ENCODE measurements at regions of chr10 and their contacts with region 1.

Region 1: DNA sequence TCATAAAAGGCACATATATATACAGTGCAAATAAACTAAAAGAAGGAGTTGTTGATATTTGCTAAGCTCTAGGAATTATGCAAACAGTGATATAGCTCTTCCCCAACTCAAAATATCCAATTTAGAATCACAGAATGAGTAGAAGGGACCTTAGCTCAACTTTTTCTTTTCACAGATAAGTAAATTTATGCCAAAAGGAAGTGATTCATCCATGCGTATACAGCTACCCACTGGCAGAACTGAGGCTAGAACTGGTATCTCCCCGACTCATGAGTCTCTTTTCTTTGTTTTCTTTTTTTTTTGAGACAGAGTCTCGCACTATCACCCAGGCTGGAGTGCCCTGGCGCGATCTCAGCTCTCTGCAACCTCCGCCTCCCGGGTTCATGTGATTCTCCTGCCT is 54.2 kb upstream of the SVIL start:
- DNase-seq: peak; percentile 50
- H3K4me3 Mint-ChIP-seq: no peak overlapping the region
- H3K27ac Mint-ChIP-seq: peak overlapping the region; percentile 30
- H3K4me1 Mint-ChIP-seq: peaks cover 39% of the 10 kb centered on the region
- H3K27me3 Mint-ChIP-seq: no peaks in the 10 kb centered on the region

Region 2: GRCh38 chr10:29714096-29714874 is 25.3 kb after region 1 on chr10:
- CTCF ChIA-PET with region 1: interaction called, 4 read pairs
- intact Hi-C with region 1: loop called (anchors 1 kb)
- DNase-seq: peak; percentile 27
- H3K4me3 Mint-ChIP-seq: no peak overlapping the region
- H3K27ac Mint-ChIP-seq: no peak overlapping the region
- H3K4me1 Mint-ChIP-seq: peaks cover 28% of the 10 kb centered on the region
- H3K27me3 Mint-ChIP-seq: no peaks in the 10 kb centered on the region